ENCODE measurements at regions of chr2 and their contacts with region 1.

Region 1: DNA sequence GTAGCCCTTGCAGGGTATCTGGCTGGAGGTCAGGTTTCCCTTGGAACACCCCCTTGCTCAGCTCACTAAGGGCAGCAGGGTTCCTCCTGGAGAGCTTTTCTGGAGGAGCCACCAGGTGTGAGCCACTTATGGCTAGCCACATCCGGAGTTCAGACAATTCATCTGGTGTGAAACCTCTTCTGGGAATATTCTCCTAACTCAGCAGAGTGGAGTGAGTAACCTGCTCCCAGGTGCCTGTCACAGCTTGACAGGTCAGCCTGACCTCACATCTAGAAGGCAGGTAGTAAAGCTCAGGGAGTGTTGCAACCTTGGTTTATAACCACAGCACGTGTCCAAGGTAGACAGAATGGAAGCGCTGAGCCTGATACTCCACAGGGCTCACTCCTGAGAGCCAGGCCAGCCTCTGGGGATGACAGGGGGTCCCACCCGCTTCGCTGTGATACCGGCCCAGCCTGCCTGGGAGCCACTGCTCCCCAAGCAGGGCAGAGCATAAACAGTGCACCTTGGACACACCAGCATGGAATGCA is 62.6 kb upstream of the TGFA start:
- DNase-seq: peak; percentile 99
- H3K4me3 ChIP-seq: no peak overlapping the region
- H3K27ac ChIP-seq: peak overlapping the region; percentile 46
- H3K4me1 ChIP-seq: peaks cover 25% of the 10 kb centered on the region
- H3K27me3 ChIP-seq: no peaks in the 10 kb centered on the region
- CTCF ChIP-seq: no peak

Region 2: GRCh38 chr2:70328921-70329561 is 287.2 kb before region 1 on chr2:
- CTCF ChIA-PET with region 1: no interaction called
- dilution Hi-C with region 1: no loop called
- in situ Hi-C with region 1: no loop called
- intact Hi-C with region 1: loop called (anchors 2 kb)
- DNase-seq: peak; percentile 97
- H3K4me3 ChIP-seq: no peak overlapping the region
- H3K27ac ChIP-seq: peak overlapping the region; percentile 84
- H3K4me1 ChIP-seq: peaks cover 15% of the 10 kb centered on the region
- H3K27me3 ChIP-seq: no peaks in the 10 kb centered on the region
- CTCF ChIP-seq: no peak

Region 3: GRCh38 chr2:70460333-70460732 is 155.9 kb before region 1 on chr2:
- CTCF ChIA-PET with region 1: no interaction called
- dilution Hi-C with region 1: no loop called
- in situ Hi-C with region 1: no loop called
- intact Hi-C with region 1: loop called (anchors 1 kb)
- DNase-seq: peak; percentile 24
- H3K4me3 ChIP-seq: no peak overlapping the region
- H3K27ac ChIP-seq: no peak overlapping the region
- H3K4me1 ChIP-seq: peaks cover 6% of the 10 kb centered on the region
- H3K27me3 ChIP-seq: no peaks in the 10 kb centered on the region
- CTCF ChIP-seq: peak; percentile 51 to 58

Region 4: DNA sequence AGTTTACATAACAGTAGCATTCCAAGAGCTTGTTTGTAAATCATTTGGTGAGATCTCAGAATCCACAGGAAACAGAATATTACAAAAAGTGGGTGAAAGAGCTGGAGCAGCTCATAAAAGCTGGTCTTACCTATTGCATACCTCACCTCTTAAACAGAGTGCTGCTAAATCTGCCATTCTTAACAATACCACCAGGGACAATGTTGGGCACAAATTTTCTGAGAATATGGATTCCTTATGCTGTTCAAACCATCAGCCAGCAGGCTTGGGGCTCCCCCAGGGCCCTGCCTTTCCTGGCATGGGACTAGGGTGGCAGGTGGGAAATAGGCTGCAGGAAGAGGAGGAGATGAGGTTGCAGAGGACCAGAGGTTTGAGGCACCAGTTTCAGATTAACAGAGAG is 118.2 kb before region 1 on chr2:
- CTCF ChIA-PET with region 1: interaction called, 5 read pairs
- dilution Hi-C with region 1: no loop called
- in situ Hi-C with region 1: no loop called
- intact Hi-C with region 1: loop called (anchors 5 kb)
- DNase-seq: no peak
- H3K4me3 ChIP-seq: no peak overlapping the region
- H3K27ac ChIP-seq: no peak overlapping the region
- H3K4me1 ChIP-seq: peaks cover 14% of the 10 kb centered on the region
- H3K27me3 ChIP-seq: no peaks in the 10 kb centered on the region
- CTCF ChIP-seq: peak; percentile 32 to 48

Region 5: DNA sequence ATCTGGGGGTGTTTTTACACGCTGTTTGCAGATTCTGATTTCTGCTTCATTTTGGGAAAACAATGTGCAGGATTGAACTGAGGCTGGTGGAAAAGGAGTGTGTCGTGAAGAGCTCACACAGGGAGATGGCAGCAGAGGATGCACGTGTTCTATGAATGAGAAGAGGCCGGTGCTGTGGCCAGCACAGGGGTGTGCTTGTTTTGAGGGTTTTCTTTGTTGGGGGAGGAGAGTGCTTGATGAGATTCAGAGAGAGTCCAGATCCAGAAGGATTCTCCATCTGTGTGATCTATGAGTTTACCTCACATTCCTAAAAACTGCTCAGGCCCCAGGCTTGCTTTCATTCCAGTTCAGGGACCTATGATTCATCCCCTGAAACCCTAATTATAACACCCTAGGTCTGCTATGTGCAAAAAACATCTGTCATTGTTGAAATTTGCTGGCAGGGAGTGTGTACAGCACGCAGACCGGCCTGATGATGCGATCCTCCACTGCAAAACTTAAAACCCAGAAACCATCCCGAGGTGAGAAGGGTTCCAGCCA is 74.7 kb before region 1 on chr2:
- CTCF ChIA-PET with region 1: interaction called, 3 read pairs
- dilution Hi-C with region 1: no loop called
- in situ Hi-C with region 1: no loop called
- intact Hi-C with region 1: loop called (anchors 1 kb)
- DNase-seq: peak; percentile 79
- H3K4me3 ChIP-seq: no peak overlapping the region
- H3K27ac ChIP-seq: peak overlapping the region; percentile 77
- H3K4me1 ChIP-seq: peaks cover 24% of the 10 kb centered on the region
- H3K27me3 ChIP-seq: no peaks in the 10 kb centered on the region
- CTCF ChIP-seq: no peak

Region 6: DNA sequence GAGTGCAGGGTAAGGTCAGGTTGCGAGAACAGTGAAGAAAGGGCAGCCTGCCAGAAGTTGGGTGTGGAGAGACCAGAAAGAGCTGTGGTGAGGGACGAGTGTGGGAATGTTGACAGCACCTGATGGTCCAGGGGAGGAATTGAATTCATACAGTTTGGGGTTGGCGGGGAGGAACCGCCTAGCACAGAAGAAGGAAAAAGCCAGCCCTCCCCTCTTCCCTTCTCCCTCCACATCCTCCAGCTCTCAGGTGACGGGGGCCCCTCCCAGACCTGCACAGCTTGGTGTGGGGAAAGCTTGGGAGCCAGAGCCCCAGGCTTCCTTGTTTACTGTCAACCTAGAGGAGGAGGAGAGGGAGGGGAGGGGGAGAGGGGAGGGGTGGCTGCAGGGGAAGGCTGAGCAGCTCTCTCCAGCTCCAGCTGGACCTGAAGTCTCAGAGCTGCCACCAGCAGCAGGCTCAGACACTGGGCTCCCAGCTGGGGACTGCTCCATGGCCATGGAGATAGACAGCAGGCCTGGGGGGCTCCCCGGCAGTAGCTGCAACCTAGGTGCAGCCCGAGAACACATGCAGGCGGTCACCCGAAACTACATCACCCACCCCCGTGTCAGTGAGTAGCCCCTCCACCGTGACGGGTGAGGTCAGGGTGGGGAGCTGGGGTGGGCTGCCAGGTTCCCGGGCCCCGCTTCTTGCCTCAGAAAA is 319.4 kb after region 1 on chr2 and contains the start of gene ATP6V1B1:
- CTCF ChIA-PET with region 1: no interaction called
- dilution Hi-C with region 1: no loop called
- in situ Hi-C with region 1: no loop called
- intact Hi-C with region 1: no loop called
- DNase-seq: no peak
- H3K4me3 ChIP-seq: no peak within 1 kb of the TSS
- H3K27ac ChIP-seq: no peak within 1 kb of the TSS
- H3K4me1 ChIP-seq: no peaks in the 10 kb centered on the region
- H3K27me3 ChIP-seq: no peaks in the 10 kb centered on the region
- CTCF ChIP-seq: no peak
- total RNA-seq, gene ATP6V1B1: 1.3 TPM in 1 of 2 donors, not detected in the other